ENCODE measurements at regions of chr20 and their contacts with region 1.

Region 1: DNA sequence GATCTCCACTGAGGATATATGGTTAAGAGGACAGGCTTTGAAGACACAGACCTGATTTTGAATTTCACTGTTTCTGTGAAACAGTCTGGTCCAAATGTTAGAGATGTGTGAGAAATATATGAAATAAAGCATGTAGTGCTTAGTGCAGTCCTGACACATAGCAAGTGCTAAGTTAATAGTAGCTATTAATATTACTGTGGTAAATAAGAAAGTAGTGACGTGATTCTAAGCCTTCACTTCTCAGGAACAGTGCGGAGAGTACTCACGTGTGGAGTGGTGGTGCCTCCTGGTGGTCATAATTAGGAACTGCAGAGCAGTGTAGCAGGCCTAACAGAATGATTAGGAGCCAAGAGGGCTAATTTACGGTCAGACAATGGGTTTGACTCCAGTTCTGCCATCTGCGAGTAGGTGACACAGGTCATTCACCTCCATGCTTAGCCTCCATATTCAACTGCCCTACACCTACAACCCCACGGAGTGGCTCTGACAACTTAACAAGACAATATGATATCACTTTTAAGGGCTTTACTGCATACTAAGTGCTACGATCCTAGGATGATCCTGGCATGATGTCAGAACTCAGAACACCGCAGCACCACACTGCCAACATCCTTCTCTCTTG is 106.2 kb downstream of the JPH2 start:
- DNase-seq: peak; percentile 83
- H3K4me3 ChIP-seq: no peak overlapping the region
- H3K27ac ChIP-seq: no peak overlapping the region
- H3K4me1 ChIP-seq: peaks cover 10% of the 10 kb centered on the region
- H3K27me3 ChIP-seq: no peaks in the 10 kb centered on the region

Region 2: DNA sequence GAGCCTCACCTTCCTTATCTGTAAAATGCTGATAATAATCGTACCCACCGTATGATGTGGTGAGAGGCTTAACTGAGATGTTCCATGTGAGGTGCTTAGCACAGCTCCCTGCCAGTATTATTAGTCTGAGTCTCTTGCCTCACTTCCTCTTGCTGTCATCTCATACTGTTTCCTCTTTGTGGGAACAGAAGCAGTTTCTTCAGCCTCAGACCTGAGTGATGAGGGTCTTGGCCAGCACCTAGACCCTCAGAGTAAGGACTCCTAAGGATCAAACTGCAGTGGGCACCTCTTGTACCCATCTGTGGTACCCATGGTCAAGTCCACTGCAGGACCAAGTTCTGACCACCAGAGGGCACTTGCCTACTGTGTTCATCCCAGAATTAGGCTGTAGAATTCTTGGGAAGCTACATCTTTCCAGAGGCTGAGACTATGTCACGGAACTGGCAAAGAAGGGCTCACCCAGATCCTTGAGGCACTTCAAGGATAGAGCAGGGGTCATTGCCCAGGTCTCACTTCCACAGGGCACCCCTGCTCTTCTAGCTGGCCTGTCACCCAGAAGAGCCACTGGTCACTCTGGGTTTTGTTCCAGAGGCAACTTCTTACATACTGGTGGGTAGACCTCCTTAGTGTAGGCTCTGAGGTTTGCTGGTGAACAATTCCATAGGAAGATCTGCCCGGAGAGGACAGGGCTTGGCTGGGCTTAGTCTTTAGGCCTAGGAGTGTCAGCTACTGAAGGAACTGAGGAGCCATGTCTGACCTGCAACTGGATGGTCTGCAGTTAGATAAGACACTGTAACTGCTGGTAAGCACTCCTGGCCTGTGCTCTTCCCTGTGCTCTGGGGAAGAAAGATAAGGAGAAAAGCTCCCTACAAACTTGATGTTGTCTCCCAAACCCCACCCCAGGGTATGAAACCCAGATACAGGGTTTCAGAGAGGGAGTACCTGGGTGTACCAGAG is 542.6 kb before region 1 on chr20:
- in situ Hi-C with region 1: loop called (anchors 10 kb)
- DNase-seq: peak; percentile 72
- H3K4me3 ChIP-seq: no peak overlapping the region
- H3K27ac ChIP-seq: no peak overlapping the region
- H3K4me1 ChIP-seq: peaks cover 9% of the 10 kb centered on the region
- H3K27me3 ChIP-seq: no peaks in the 10 kb centered on the region

Region 3: DNA sequence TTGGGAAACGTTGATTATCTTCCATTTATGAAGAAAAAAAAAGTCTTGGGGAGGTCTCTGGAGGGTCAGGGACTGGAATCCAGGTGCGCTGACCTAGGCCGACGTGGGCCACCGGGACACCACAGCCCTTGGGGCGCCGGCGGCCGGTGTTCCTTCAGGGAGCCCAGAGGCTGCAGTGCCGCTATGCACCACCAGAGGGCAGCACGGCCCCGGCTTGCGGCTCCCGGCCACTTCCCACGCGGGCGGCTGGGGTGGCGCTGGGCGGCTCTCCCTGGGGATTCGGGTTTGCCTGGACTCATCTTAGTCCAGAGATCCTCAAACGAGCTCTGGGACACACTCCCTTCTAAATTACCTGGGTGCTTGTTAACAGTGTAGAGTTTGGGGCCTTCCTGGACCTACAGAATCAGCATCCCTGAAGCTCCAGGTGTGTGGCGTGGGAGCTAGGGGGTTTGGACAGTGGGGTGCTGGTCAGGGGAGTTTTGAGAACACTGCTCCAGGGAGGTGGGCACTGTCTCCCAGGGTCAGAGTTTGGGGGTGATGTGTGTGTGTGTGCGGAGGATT is 330.9 kb before region 1 on chr20:
- in situ Hi-C with region 1: loop called (anchors 5 kb)
- DNase-seq: peak; percentile 75
- H3K4me3 ChIP-seq: no peak overlapping the region
- H3K27ac ChIP-seq: no peak overlapping the region
- H3K4me1 ChIP-seq: peaks cover 23% of the 10 kb centered on the region
- H3K27me3 ChIP-seq: no peaks in the 10 kb centered on the region